Endothelial cell of umbilical vein (primary cell): ENCODE measurements at regions of chr10 and their contacts with region 1.

Region 1: GRCh38 chr10:109883859-109884771 is 39.2 kb downstream of the XPNPEP1 start:
- DNase-seq: peak; percentile 93
- H3K4me3 ChIP-seq: no peak overlapping the region
- H3K27ac ChIP-seq: peak overlapping the region; percentile 68
- H3K4me1 ChIP-seq: peaks cover 10% of the 10 kb centered on the region
- H3K27me3 ChIP-seq: no peaks in the 10 kb centered on the region
- CTCF ChIP-seq: peak; percentile 92 to 97
- POLR2A ChIP-seq: no peak

Region 2: GRCh38 chr10:109790647-109791046 is 93.5 kb before region 1 on chr10:
- CTCF ChIA-PET with region 1: no interaction called
- POLR2A ChIA-PET with region 1: no interaction called
- dilution Hi-C with region 1: no loop called
- intact Hi-C with region 1: no loop called
- DNase-seq: no peak
- H3K4me3 ChIP-seq: no peak overlapping the region
- H3K27ac ChIP-seq: no peak overlapping the region
- H3K4me1 ChIP-seq: no peaks in the 10 kb centered on the region
- H3K27me3 ChIP-seq: no peaks in the 10 kb centered on the region
- CTCF ChIP-seq: no peak
- POLR2A ChIP-seq: no peak

Region 3: GRCh38 chr10:109934958-109935706 is 51.0 kb after region 1 on chr10:
- CTCF ChIA-PET with region 1: interaction called, 51 read pairs
- POLR2A ChIA-PET with region 1: interaction called, 3 read pairs
- dilution Hi-C with region 1: no loop called
- intact Hi-C with region 1: loop called (anchors 1 kb)
- DNase-seq: peak; percentile 99
- H3K4me3 ChIP-seq: peak overlapping the region in 1 of 3 experiments; percentile 26
- H3K27ac ChIP-seq: peak overlapping the region; percentile 52
- H3K4me1 ChIP-seq: peaks cover 24% of the 10 kb centered on the region
- H3K27me3 ChIP-seq: no peaks in the 10 kb centered on the region
- CTCF ChIP-seq: no peak
- POLR2A ChIP-seq: no peak

Region 4: GRCh38 chr10:110007701-110008517 is 123.8 kb after region 1 on chr10 and contains the start of gene ADD3:
- CTCF ChIA-PET with region 1: interaction called, 50 read pairs
- POLR2A ChIA-PET with region 1: no interaction called
- dilution Hi-C with region 1: no loop called
- intact Hi-C with region 1: loop called (anchors 1 kb)
- DNase-seq: peak; percentile 91
- H3K4me3 ChIP-seq: peak within 1 kb of the TSS; percentile 71 to 99 (median 88)
- H3K27ac ChIP-seq: peak within 1 kb of the TSS; percentile 30
- H3K4me1 ChIP-seq: peaks cover 18% of the 10 kb centered on the region
- H3K27me3 ChIP-seq: peaks cover 0 to 4% of the 10 kb centered on the region in 2 experiments
- CTCF ChIP-seq: no peak
- POLR2A ChIP-seq: peak; percentile 57
- total RNA-seq, gene ADD3: 52.3 and 55.2 TPM in 2 replicates

Region 5: GRCh38 chr10:110076559-110077318 is 192.6 kb after region 1 on chr10:
- CTCF ChIA-PET with region 1: interaction called, 46 read pairs
- POLR2A ChIA-PET with region 1: no interaction called
- dilution Hi-C with region 1: no loop called
- intact Hi-C with region 1: loop called (anchors 1 kb)
- DNase-seq: peak; percentile 91
- H3K4me3 ChIP-seq: peak overlapping the region in 1 of 3 experiments; percentile 23
- H3K27ac ChIP-seq: peak overlapping the region; percentile 83
- H3K4me1 ChIP-seq: peaks cover 53% of the 10 kb centered on the region
- H3K27me3 ChIP-seq: no peaks in the 10 kb centered on the region
- CTCF ChIP-seq: no peak
- POLR2A ChIP-seq: no peak

Region 6: GRCh38 chr10:110137142-110137545 is 253.0 kb after region 1 on chr10:
- CTCF ChIA-PET with region 1: interaction called, 58 read pairs
- POLR2A ChIA-PET with region 1: no interaction called
- dilution Hi-C with region 1: no loop called
- intact Hi-C with region 1: loop called (anchors 1 kb)
- DNase-seq: peak; percentile 74
- H3K4me3 ChIP-seq: no peak overlapping the region
- H3K27ac ChIP-seq: no peak overlapping the region
- H3K4me1 ChIP-seq: peaks cover 14% of the 10 kb centered on the region
- H3K27me3 ChIP-seq: no peaks in the 10 kb centered on the region
- CTCF ChIP-seq: peak; percentile 49 to 53
- POLR2A ChIP-seq: no peak

Region 7: GRCh38 chr10:110279407-110279986 is 395.4 kb after region 1 on chr10:
- CTCF ChIA-PET with region 1: interaction called, 58 read pairs
- POLR2A ChIA-PET with region 1: no interaction called
- dilution Hi-C with region 1: loop called (anchors 25 kb)
- intact Hi-C with region 1: loop called (anchors 1 kb)
- DNase-seq: peak; percentile 76
- H3K4me3 ChIP-seq: peak overlapping the region in 1 of 3 experiments; percentile 41
- H3K27ac ChIP-seq: no peak overlapping the region
- H3K4me1 ChIP-seq: peaks cover 5% of the 10 kb centered on the region
- H3K27me3 ChIP-seq: peaks cover 0 to 2% of the 10 kb centered on the region in 2 experiments
- CTCF ChIP-seq: peak; percentile 61 to 66
- POLR2A ChIP-seq: no peak